ENCODE measurements at regions of chr5 and their contacts with region 1.

Region 1: GRCh38 chr5:79020861-79021561 is 35.9 kb upstream of the ARSB start:
- DNase-seq: peak; percentile 33
- H3K4me3 ChIP-seq: peak overlapping the region; percentile 29 to 38; a peak in 3 of 4 replicates
- H3K27ac ChIP-seq: peak overlapping the region in 1 of 2 experiments; percentile 60; a peak in 3 of 4 replicates
- H3K4me1 ChIP-seq: peaks cover 0 to 11% of the 10 kb centered on the region in 2 experiments; a peak in 3 of 4 replicates
- H3K27me3 ChIP-seq: no peaks in the 10 kb centered on the region
- CTCF ChIP-seq: peak; percentile 91
- EP300 ChIP-seq: peak in 1 of 2 experiments; percentile 22; a peak in 1 of 4 replicates
- RAD21 ChIP-seq: peak; percentile 88

Region 2: DNA sequence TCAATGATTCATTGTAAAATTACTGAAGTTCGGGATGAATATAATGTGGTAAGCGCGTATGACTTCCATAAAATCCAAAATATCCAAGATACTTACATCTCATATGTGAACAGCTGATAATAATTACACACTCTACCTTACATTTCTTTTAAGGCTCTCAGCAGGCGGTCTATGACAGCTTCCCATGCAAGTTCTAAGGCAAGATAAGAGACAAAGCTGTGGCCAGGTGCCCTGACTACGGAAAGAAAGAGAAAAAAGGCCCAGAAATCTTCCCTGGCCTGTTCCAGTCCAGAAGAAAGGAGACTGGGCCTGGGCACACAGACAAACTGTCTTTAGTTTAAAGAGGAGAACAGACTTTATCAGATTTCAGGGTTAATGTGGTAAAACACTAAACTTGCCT is 105.0 kb before region 1 on chr5:
- CTCF ChIA-PET with region 1: no interaction called
- POLR2A ChIA-PET with region 1: no interaction called
- DNase-seq: no peak
- H3K4me3 ChIP-seq: no peak overlapping the region
- H3K27ac ChIP-seq: no peak overlapping the region
- H3K4me1 ChIP-seq: peaks cover 0 to 13% of the 10 kb centered on the region in 2 experiments; a peak in 2 of 4 replicates
- H3K27me3 ChIP-seq: no peaks in the 10 kb centered on the region
- CTCF ChIP-seq: no peak
- EP300 ChIP-seq: no peak
- RAD21 ChIP-seq: no peak

Region 3: GRCh38 chr5:79042188-79042587 is 21.2 kb after region 1 on chr5:
- CTCF ChIA-PET with region 1: interaction called, 26 read pairs
- POLR2A ChIA-PET with region 1: no interaction called
- DNase-seq: no peak
- H3K4me3 ChIP-seq: no peak overlapping the region
- H3K27ac ChIP-seq: no peak overlapping the region
- H3K4me1 ChIP-seq: no peaks in the 10 kb centered on the region
- H3K27me3 ChIP-seq: no peaks in the 10 kb centered on the region; the same call in 1 of the 2 replicates
- CTCF ChIP-seq: no peak
- EP300 ChIP-seq: no peak
- RAD21 ChIP-seq: no peak

Region 4: GRCh38 chr5:79091064-79091463 is 70.1 kb after region 1 on chr5:
- CTCF ChIA-PET with region 1: interaction called, 21 read pairs
- POLR2A ChIA-PET with region 1: no interaction called
- DNase-seq: no peak
- H3K4me3 ChIP-seq: no peak overlapping the region
- H3K27ac ChIP-seq: no peak overlapping the region
- H3K4me1 ChIP-seq: peaks cover 0 to 16% of the 10 kb centered on the region in 2 experiments; a peak in 2 of 4 replicates
- H3K27me3 ChIP-seq: no peaks in the 10 kb centered on the region
- CTCF ChIP-seq: no peak
- EP300 ChIP-seq: no peak
- RAD21 ChIP-seq: no peak

Region 5: DNA sequence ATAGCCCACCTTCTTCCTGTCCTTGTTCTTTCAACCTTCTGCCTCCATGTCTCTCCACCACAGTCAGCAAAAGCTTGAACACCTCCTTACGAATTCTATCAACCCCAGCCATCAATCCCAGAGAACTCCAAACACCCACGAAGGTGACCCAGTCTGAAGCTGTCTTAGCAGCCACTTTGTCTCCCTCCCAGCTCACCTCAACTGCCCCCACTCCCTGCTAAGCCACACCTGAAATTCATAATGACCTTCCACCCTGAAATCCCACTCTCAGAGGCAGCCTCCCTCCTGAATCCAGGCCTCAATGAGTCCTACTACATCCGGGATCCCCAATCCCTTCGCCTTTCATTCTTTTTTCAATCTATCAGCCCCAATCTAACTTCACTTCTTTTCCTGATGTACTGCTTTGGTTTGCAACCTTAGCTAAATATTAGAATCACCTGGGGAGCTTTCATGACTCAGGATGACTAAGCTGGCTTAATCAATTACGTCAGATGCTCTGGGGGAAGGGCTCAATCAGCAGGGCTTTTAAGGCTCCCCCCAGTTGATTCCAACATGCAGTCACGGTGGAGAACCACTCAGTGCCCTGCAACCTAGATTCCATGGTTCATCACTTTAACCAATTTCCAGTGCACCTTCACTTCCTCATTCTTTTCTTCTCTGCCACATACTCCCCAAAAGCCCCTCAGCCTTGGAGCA is 122.8 kb after region 1 on chr5:
- CTCF ChIA-PET with region 1: interaction called, 93 read pairs
- POLR2A ChIA-PET with region 1: no interaction called
- DNase-seq: no peak
- H3K4me3 ChIP-seq: no peak overlapping the region
- H3K27ac ChIP-seq: no peak overlapping the region
- H3K4me1 ChIP-seq: no peaks in the 10 kb centered on the region
- H3K27me3 ChIP-seq: no peaks in the 10 kb centered on the region
- CTCF ChIP-seq: no peak
- EP300 ChIP-seq: no peak
- RAD21 ChIP-seq: no peak

Region 6: GRCh38 chr5:79241535-79241979 is 220.5 kb after region 1 on chr5:
- CTCF ChIA-PET with region 1: interaction called, 24 read pairs
- POLR2A ChIA-PET with region 1: no interaction called
- DNase-seq: no peak
- H3K4me3 ChIP-seq: no peak overlapping the region
- H3K27ac ChIP-seq: no peak overlapping the region
- H3K4me1 ChIP-seq: peaks cover 2 to 7% of the 10 kb centered on the region in 2 experiments; a peak in 3 of 4 replicates
- H3K27me3 ChIP-seq: no peaks in the 10 kb centered on the region
- CTCF ChIP-seq: no peak
- EP300 ChIP-seq: no peak
- RAD21 ChIP-seq: no peak

Region 7: GRCh38 chr5:79474367-79475151 is 453.5 kb after region 1 on chr5:
- CTCF ChIA-PET with region 1: interaction called, 219 read pairs
- POLR2A ChIA-PET with region 1: no interaction called
- DNase-seq: no peak
- H3K4me3 ChIP-seq: no peak overlapping the region
- H3K27ac ChIP-seq: no peak overlapping the region
- H3K4me1 ChIP-seq: no peaks in the 10 kb centered on the region; a peak in 3 of 4 replicates
- H3K27me3 ChIP-seq: no peaks in the 10 kb centered on the region
- CTCF ChIP-seq: no peak
- EP300 ChIP-seq: no peak
- RAD21 ChIP-seq: no peak